Activated CD4-positive, alpha-beta T cell treated with anti-CD3 and anti-CD28 coated beads for 36 hours (primary cell): ENCODE measurements at regions of chr10 and their contacts with region 1.

Region 1: GRCh38 chr10:128263891-128264688 is 137.9 kb upstream of the MKI67 start:
- DNase-seq: peak; percentile 77
- ATAC-seq: peak; percentile 47
- H3K4me3 Mint-ChIP-seq: no peak overlapping the region
- H3K27ac Mint-ChIP-seq: no peak overlapping the region
- H3K4me1 Mint-ChIP-seq: no peaks in the 10 kb centered on the region
- H3K27me3 Mint-ChIP-seq: peaks cover 33% of the 10 kb centered on the region

Region 2: DNA sequence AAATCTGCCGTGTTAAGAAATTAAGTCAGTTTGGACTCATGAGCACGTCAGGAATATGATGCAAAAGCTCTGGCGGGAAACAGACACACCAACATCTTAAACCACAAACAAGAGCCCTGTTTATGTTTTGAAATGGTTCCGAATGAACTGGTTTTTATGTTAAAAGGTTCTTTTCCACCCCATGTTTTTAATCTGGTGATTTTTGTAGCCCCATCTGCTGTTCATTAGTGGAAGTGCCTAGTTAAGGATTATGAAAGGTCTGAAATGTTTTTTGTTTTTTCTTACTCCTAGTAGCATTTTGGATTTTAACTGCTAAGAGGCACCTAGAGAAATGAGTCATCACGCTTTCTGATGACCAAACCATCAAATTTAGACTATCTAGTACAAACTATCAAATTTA is 266.2 kb after region 1 on chr10:
- CTCF ChIA-PET with region 1: no interaction called
- POLR2A ChIA-PET with region 1: no interaction called
- intact Hi-C with region 1: loop called (anchors 1 to 10 kb)
- DNase-seq: no peak
- ATAC-seq: no peak
- H3K4me3 Mint-ChIP-seq: no peak overlapping the region
- H3K27ac Mint-ChIP-seq: no peak overlapping the region
- H3K4me1 Mint-ChIP-seq: no peaks in the 10 kb centered on the region
- H3K27me3 Mint-ChIP-seq: peaks cover 4% of the 10 kb centered on the region

Region 3: DNA sequence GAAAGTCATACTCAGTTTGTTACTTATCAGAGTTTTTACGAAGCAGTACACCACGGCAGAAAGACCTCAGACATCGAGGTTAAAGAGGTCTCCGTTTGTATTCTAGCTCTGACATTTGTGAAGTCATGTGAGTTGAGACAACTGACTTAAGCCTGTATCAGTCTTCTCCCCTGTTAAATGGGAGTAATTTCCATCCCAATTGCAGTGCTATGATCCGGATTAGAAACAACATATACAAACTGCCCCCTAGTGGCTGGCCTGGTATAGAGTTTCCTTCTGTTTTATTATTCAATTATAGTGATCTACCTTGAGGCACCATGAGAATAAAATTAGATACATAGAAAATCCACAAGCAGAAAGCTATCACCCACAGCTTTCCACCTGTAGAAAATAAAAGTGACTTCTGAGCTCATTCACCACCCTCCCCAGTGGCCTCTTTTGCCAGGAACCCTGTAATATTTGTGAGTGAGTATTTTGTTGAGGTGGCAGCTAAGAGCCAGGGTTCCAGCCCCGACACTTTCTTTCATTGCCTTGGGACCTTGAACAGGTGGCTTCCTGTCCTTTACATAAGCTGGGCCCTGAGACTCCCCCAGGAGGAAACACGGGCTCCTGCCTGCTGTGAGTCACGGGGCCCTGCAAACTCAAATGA is 595.8 kb after region 1 on chr10:
- CTCF ChIA-PET with region 1: interaction called, 3 read pairs
- POLR2A ChIA-PET with region 1: no interaction called
- intact Hi-C with region 1: loop called (anchors 1 to 10 kb)
- DNase-seq: peak; percentile 58
- ATAC-seq: no peak
- H3K4me3 Mint-ChIP-seq: no peak overlapping the region
- H3K27ac Mint-ChIP-seq: no peak overlapping the region
- H3K4me1 Mint-ChIP-seq: no peaks in the 10 kb centered on the region
- H3K27me3 Mint-ChIP-seq: peaks cover 8% of the 10 kb centered on the region